IMR-90 (cell line): ENCODE measurements at regions of chr21 and their contacts with region 1.

Region 1: GRCh38 chr21:33915368-33916199 is at the start of gene ATP5PO:
- DNase-seq: peak; percentile 98
- ATAC-seq: peak; percentile 100
- H3K4me3 ChIP-seq: peak within 1 kb of the TSS; percentile 77
- H3K27ac ChIP-seq: peak within 1 kb of the TSS; percentile 84
- H3K4me1 ChIP-seq: peaks cover 2% of the 10 kb centered on the region; the same call in 1 of the 2 replicates
- H3K27me3 ChIP-seq: no peaks in the 10 kb centered on the region
- CTCF ChIP-seq: no peak
- POLR2A ChIP-seq: peak; percentile 86
- RAD21 ChIP-seq: no peak
- total RNA-seq, gene ATP5PO: 154 and 237 TPM in 2 replicates

Region 2: DNA sequence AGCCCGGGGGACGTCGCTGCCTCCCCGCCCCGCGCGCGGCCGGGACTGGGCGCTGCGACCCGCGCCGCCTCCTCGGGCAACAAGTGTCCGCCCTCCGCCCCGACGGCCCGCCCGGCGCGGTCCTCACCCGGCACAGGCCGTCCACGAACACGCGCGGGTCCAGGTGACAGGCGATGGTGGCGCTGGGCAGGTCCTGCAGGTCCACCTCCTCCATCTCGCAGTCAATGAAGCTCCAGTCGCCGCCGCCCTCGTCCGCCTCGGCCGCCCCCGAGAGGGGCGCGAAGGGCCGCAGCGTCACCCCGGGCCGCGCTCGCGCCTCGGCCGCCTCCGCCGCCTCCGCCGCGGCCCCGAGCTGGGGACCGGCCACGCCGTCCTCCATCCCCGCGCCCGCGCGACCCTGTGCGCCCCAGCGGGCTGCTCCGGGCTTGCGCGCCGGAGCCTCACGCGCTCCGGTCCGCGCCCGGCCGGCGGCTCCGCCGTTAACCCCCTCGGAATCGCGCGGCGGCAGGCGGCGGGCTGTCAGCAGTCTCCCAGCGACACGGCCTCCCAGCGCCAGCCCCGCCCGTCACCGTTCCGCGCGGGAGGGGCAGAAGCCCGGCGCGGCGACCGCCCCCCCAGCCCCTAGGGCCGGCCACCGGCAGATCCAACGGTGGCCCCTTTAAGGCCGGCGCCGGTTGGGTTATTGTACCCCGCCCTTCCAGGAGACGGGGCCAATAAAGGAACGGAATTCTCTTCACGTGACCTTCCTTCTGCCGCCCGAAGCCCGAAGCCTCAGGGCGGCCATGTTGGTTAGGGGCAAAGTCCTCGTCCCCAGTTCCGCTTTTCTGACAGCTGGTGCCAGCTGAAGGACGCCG is 699.3 kb after region 1 on chr21 and contains the start of gene RCAN1:
- CTCF ChIA-PET with region 1: no interaction called
- POLR2A ChIA-PET with region 1: no interaction called
- dilution Hi-C with region 1: no loop called
- in situ Hi-C with region 1: loop called (anchors 25 kb)
- intact Hi-C with region 1: no loop called
- DNase-seq: peak; percentile 91
- ATAC-seq: peak; percentile 97
- H3K4me3 ChIP-seq: peak within 1 kb of the TSS; percentile 63
- H3K27ac ChIP-seq: peak within 1 kb of the TSS; percentile 72
- H3K4me1 ChIP-seq: peaks cover 2% of the 10 kb centered on the region; the same call in 1 of the 2 replicates
- H3K27me3 ChIP-seq: peaks cover 7% of the 10 kb centered on the region
- CTCF ChIP-seq: no peak
- POLR2A ChIP-seq: no peak
- RAD21 ChIP-seq: no peak
- total RNA-seq, gene RCAN1: 175 and 183 TPM in 2 replicates